Common myeloid progenitor, CD34-positive (primary cell): ENCODE measurements at regions of chr17 and their contacts with region 1.

Region 1: DNA sequence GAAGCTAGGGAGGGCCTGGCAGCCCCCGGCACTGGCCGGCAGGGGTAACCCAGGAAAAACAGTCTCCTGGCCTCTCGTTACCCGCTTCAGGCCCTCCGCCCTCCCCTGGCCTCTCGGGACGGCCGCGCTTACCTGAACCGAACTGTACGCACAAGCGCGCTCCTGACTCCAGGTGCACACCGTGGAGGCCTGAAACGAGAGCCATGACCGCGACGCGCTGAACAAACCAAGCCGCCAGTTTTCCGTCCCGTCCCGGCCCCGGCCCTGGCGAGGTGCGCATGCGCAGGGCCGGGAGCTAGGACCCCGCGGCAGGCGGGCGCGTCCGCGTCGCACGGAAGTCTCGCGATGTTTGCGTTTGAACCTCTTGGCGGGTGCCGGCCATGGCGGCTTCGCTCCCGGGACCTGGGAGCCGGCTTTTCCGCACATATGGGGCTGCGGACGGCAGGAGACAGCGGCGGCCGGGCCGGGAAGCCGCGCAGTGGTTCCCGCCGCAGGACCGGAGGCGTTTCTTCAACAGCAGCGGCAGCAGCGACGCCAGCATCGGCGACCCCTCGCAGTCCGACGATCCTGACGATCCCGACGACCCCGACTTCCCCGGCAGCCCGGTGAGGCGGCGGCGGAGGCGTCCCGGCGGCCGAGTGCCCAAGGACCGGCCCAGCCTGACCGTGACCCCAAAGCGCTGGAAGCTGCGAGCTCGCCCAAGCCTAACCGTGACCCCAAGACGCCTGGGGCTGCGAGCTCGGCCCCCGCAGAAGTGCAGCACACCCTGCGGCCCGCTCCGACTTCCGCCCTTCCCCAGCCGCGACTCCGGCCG is at the start of gene HASPIN:
- DNase-seq: peak; percentile 85 to 92 (median 90)
- H3K4me3 ChIP-seq: peak within 1 kb of the TSS; percentile 81 to 99 (median 91)
- H3K27ac ChIP-seq: peak within 1 kb of the TSS; percentile 74 to 90
- H3K4me1 ChIP-seq: peaks cover 25 to 43% (median 32%) of the 10 kb centered on the region in 4 experiments
- H3K27me3 ChIP-seq: no peaks in the 10 kb centered on the region

Region 2: GRCh38 chr17:3712811-3713463 is 10.8 kb before region 1 on chr17:
- CTCF ChIA-PET with region 1: interaction called, 11 read pairs
- POLR2A ChIA-PET with region 1: interaction called, 4 read pairs
- DNase-seq: peak; percentile 43 to 87 (median 72)
- H3K4me3 ChIP-seq: no peak overlapping the region
- H3K27ac ChIP-seq: peak overlapping the region; percentile 58 to 74
- H3K4me1 ChIP-seq: peaks cover 0 to 27% (median 2%) of the 10 kb centered on the region in 4 experiments
- H3K27me3 ChIP-seq: no peaks in the 10 kb centered on the region

Region 3: GRCh38 chr17:3845621-3846441 is 122.1 kb after region 1 on chr17 and contains the start of gene NCBP3:
- CTCF ChIA-PET with region 1: interaction called, 10 read pairs
- POLR2A ChIA-PET with region 1: no interaction called
- DNase-seq: peak; percentile 94 to 97 (median 97)
- H3K4me3 ChIP-seq: peak within 1 kb of the TSS; percentile 79 to 92 (median 88)
- H3K27ac ChIP-seq: peak within 1 kb of the TSS; percentile 82 to 91
- H3K4me1 ChIP-seq: peaks cover 3 to 22% (median 19%) of the 10 kb centered on the region in 4 experiments
- H3K27me3 ChIP-seq: no peaks in the 10 kb centered on the region